Activated CD4-positive, alpha-beta T cell treated with anti-CD3 and anti-CD28 coated beads, Interleukin-2, amount 10 ng/mL, durations not matched to agents 24 days and 14 days (primary cell): ENCODE measurements at regions of chr6 and their contacts with region 1.

Region 1: GRCh38 chr6:399785-400534 is 8.4 kb downstream of the IRF4 start:
- DNase-seq: peak; percentile 87
- H3K4me3 Mint-ChIP-seq: peak overlapping the region; percentile 80
- H3K27ac Mint-ChIP-seq: peak overlapping the region; percentile 87
- H3K4me1 Mint-ChIP-seq: peaks cover 88% of the 10 kb centered on the region
- H3K27me3 Mint-ChIP-seq: no peaks in the 10 kb centered on the region

Region 2: GRCh38 chr6:422433-423054 is 22.6 kb after region 1 on chr6:
- intact Hi-C with region 1: loop called (anchors 2 kb)
- DNase-seq: peak; percentile 88
- H3K4me3 Mint-ChIP-seq: no peak overlapping the region
- H3K27ac Mint-ChIP-seq: peak overlapping the region; percentile 91
- H3K4me1 Mint-ChIP-seq: peaks cover 30% of the 10 kb centered on the region
- H3K27me3 Mint-ChIP-seq: no peaks in the 10 kb centered on the region

Region 3: DNA sequence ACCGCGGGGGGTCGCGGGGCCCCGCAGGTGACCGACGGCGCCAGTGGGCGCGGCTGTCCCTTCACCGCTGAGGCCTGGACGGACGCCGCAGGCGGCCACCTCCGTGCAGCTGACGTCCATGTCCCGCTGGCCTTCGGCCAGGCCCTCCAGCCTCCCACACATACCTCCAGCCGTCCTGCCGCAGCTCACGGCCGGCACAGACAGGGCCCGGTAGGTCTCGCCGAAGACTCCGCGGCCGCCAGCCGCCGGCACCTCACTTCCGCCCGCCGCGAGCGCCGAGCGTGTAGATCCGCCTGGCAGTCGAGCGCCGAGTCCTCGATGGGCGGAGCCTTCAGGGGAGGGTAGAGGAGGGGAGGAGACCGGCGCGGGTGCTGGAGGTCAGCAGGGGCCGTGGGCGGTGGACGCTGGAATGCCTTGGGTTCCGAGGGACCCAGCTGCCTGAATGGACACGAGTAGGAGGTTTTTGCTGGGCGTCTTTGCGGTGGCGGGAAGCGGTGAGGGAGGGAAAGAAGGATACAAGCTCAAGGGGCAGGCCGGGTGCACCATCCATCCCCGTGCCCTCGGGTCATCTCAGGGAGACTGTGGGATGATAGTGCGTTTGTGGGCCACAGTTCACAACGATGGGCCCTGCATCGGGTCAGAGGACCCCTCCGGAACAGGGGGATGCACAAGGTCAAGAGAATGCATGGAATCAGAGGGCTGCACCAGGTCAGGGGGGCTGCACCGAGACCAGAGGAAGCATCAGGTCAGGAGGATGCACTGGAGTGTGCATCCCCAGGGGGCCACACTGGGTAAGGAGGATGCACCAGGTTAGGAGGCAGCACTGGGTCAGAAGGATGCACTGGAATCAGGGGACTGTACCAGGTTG is 293.1 kb after region 1 on chr6 and contains the start of gene EXOC2:
- intact Hi-C with region 1: loop called (anchors 5 kb)
- DNase-seq: peak; percentile 97
- H3K4me3 Mint-ChIP-seq: peak within 1 kb of the TSS; percentile 98
- H3K27ac Mint-ChIP-seq: peak within 1 kb of the TSS; percentile 95
- H3K4me1 Mint-ChIP-seq: peaks cover 26% of the 10 kb centered on the region
- H3K27me3 Mint-ChIP-seq: no peaks in the 10 kb centered on the region
- total RNA-seq, gene EXOC2: 43.6 and 44.1 TPM in 2 replicates

Region 4: DNA sequence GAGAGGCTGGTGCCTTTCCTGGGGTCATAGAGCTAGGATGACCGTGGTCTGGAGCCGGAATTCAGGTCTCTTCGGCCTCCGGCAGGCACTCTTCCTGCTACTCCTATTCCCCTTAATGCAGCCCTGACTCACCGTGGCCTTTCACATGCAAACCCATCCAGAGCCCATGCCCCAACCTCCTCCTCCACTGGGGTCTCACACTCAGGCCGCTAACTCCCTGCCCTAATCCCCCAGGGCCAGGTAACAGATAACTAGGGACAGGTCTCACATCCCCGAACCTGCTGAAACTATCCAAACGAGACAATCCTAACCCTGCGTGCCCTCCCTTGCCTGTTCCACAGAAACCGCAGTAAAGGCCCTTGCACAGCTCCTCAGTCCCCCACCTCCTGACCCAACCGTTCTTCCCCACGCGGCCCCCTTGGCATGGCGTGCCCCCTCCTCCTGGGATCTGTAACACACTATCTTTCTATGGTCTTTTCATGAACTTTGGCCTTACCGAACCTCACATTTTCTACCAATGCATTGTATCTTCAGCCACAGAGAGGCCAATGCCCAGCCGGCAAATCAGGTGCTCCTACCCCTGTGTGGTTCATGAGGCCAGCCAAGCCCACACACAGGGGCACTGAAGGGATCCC is 538.4 kb after region 1 on chr6:
- intact Hi-C with region 1: no loop called
- DNase-seq: no peak
- H3K4me3 Mint-ChIP-seq: no peak overlapping the region
- H3K27ac Mint-ChIP-seq: no peak overlapping the region
- H3K4me1 Mint-ChIP-seq: no peaks in the 10 kb centered on the region
- H3K27me3 Mint-ChIP-seq: peaks cover 6% of the 10 kb centered on the region